Mammary epithelial cell (primary cell): ENCODE measurements at regions of chr11 and their contacts with region 1.

Region 1: GRCh38 chr11:47725445-47726442 is 10.6 kb upstream of the AGBL2 start:
- DNase-seq: peak; percentile 36
- H3K4me3 ChIP-seq: no peak overlapping the region
- H3K27ac ChIP-seq: no peak overlapping the region
- H3K4me1 ChIP-seq: peaks cover 5% of the 10 kb centered on the region
- H3K27me3 ChIP-seq: no peaks in the 10 kb centered on the region
- CTCF ChIP-seq: no peak

Region 2: GRCh38 chr11:46778416-46778815 is 947.3 kb before region 1 on chr11:
- CTCF ChIA-PET with region 1: no interaction called
- dilution Hi-C with region 1: no loop called
- in situ Hi-C with region 1: loop called in 1 of 2 experiments (anchors 25 kb)
- intact Hi-C with region 1: no loop called
- DNase-seq: no peak
- H3K4me3 ChIP-seq: no peak overlapping the region
- H3K27ac ChIP-seq: no peak overlapping the region
- H3K4me1 ChIP-seq: no peaks in the 10 kb centered on the region
- H3K27me3 ChIP-seq: no peaks in the 10 kb centered on the region
- CTCF ChIP-seq: no peak

Region 3: GRCh38 chr11:47917643-47918369 is 192.1 kb after region 1 on chr11:
- CTCF ChIA-PET with region 1: no interaction called
- dilution Hi-C with region 1: no loop called
- in situ Hi-C with region 1: no loop called
- intact Hi-C with region 1: no loop called
- DNase-seq: no peak
- H3K4me3 ChIP-seq: no peak overlapping the region
- H3K27ac ChIP-seq: no peak overlapping the region
- H3K4me1 ChIP-seq: no peaks in the 10 kb centered on the region
- H3K27me3 ChIP-seq: no peaks in the 10 kb centered on the region
- CTCF ChIP-seq: no peak

Region 4: GRCh38 chr11:47941907-47942558 is 216.3 kb after region 1 on chr11:
- CTCF ChIA-PET with region 1: no interaction called
- dilution Hi-C with region 1: no loop called
- in situ Hi-C with region 1: no loop called
- intact Hi-C with region 1: no loop called
- DNase-seq: no peak
- H3K4me3 ChIP-seq: no peak overlapping the region
- H3K27ac ChIP-seq: no peak overlapping the region
- H3K4me1 ChIP-seq: peaks cover 9% of the 10 kb centered on the region
- H3K27me3 ChIP-seq: no peaks in the 10 kb centered on the region
- CTCF ChIP-seq: no peak